Head of caudate nucleus (tissue), 42 donors: ENCODE measurements at regions of chr1 and their contacts with region 1.

Region 1: GRCh38 chr1:151934048-151934493 is 24.8 kb upstream of the THEM4 start:
- DNase-seq: peak in 29 of 42 donors; percentile 10 to 76 (median 48)

Region 2: GRCh38 chr1:151993654-151994496 is 59.8 kb after region 1 on chr1 and contains the start of gene S100A10:
- intact Hi-C with region 1: loop called (anchors 10 kb)
- DNase-seq: peak in 35 of 42 donors; percentile 20 to 75 (median 50)

Region 3: DNA sequence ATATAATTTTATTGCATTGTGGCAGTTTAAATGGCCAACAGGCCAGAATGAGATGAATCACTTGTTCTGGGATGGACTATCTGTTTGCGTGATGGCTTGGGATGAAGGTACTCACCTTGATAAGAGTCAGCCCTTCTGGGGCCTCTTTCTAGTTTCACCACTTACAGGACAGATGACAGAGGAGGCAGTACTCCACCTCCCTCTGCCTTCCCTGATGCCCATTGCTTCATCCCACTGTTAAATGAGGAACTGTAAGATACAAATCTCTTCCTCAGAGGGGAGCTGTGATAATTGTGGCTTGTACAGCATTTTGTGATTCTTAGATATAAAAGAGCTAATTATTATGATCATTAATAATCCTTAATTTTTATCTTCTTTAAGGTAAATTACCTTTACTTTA is 184.8 kb after region 1 on chr1:
- intact Hi-C with region 1: no loop called
- DNase-seq: no peak